A549 (cell line): ENCODE measurements at regions of chr3 and their contacts with region 1.

Region 1: GRCh38 chr3:150787741-150788370 is 24.9 kb upstream of the SIAH2 start:
- DNase-seq: peak; percentile 53 to 84
- ATAC-seq: peak; percentile 90 to 97
- H3K4me3 ChIP-seq: no peak overlapping the region
- H3K27ac ChIP-seq: no peak overlapping the region
- H3K4me1 ChIP-seq: no peaks in the 10 kb centered on the region
- CTCF ChIP-seq: peak; percentile 94
- EP300 ChIP-seq: no peak
- POLR2A ChIP-seq: no peak
- RAD21 ChIP-seq: peak; percentile 88 to 91

Region 2: DNA sequence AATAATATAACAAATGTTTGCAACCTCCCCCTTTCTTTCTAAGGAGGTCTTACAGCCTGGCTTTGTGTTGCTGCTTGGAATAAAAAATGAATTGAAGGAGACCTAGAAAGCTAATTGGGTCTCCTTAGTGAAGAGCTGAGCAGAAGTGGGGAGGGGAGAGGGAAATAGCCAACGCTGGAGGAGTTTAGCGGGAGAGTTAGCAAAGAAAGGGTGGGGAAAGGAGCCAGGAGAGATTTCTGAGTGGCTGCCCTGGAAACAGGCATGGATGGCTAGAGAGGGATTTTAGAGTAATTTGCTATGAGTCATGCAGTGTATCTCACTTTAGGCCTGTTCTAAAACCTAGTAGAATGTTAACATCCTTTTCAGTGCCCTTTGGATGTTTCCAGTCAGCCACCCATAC is 772.0 kb before region 1 on chr3:
- CTCF ChIA-PET with region 1: no interaction called
- POLR2A ChIA-PET with region 1: no interaction called
- DNase-seq: no peak
- ATAC-seq: no peak
- H3K4me3 ChIP-seq: no peak overlapping the region
- H3K27ac ChIP-seq: no peak overlapping the region
- H3K4me1 ChIP-seq: no peaks in the 10 kb centered on the region
- CTCF ChIP-seq: no peak
- EP300 ChIP-seq: no peak
- POLR2A ChIP-seq: no peak
- RAD21 ChIP-seq: no peak

Region 3: GRCh38 chr3:150303776-150304175 is 484.1 kb before region 1 on chr3:
- CTCF ChIA-PET with region 1: no interaction called
- POLR2A ChIA-PET with region 1: no interaction called
- DNase-seq: peak; percentile 25 to 77
- ATAC-seq: peak; percentile 84 to 95; a peak in 4 of 6 replicates
- H3K4me3 ChIP-seq: no peak overlapping the region
- H3K27ac ChIP-seq: no peak overlapping the region
- H3K4me1 ChIP-seq: peaks cover 8% of the 10 kb centered on the region; the same call in 2 of the 3 replicates
- CTCF ChIP-seq: peak; percentile 57
- EP300 ChIP-seq: no peak
- POLR2A ChIP-seq: no peak
- RAD21 ChIP-seq: peak; percentile 68 to 83

Region 4: DNA sequence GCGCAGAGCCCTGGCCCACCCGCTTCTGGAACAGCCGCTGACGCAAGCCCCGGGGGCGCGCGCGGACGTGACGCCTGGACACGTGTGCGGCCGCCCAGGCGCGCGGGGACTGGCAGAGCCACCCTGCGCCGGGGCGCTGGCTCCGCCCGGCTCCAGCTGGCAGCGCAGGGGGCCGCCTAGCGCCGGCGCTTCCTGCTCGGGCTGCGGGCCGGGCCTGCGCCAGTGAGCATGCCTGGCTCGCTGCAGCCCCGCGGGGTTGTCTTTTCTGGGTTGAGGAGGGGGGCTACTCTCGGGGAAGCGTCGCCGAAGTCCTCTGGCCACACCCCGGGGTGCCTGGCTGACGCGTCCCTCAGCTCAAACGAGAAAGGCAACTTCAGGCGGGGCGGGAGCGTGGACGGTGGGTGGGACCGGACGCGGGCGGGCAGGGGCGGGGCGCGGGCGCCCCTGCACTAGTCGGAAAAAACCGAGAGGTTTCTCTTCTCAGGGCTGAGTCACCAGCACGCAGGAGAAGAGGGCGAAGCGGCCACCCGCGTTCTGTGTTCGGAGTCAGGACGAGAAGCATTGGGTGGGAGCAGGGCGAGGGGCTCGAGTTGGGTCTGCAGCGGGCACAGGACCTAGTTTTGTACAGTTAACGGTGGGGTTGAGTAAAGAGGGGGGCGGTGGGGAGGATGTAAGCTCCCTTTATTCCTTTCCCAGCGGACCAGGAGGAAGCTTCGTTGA is 24.6 kb before region 1 on chr3 and contains the start of gene SIAH2:
- CTCF ChIA-PET with region 1: interaction called, 25 read pairs
- POLR2A ChIA-PET with region 1: interaction called, 6 read pairs
- DNase-seq: peak; percentile 93 to 95
- ATAC-seq: peak; percentile 87 to 91
- H3K4me3 ChIP-seq: peak within 1 kb of the TSS; percentile 96
- H3K27ac ChIP-seq: peak within 1 kb of the TSS; percentile 95 to 97
- H3K4me1 ChIP-seq: peaks cover 24% of the 10 kb centered on the region
- CTCF ChIP-seq: no peak
- EP300 ChIP-seq: no peak
- POLR2A ChIP-seq: peak; percentile 94
- RAD21 ChIP-seq: no peak
- polyA plus RNA-seq, gene SIAH2: 24.8 and 28.6 TPM in 2 replicates

Region 5: GRCh38 chr3:150798122-150798626 is 10.3 kb after region 1 on chr3:
- CTCF ChIA-PET with region 1: interaction called, 19 read pairs
- POLR2A ChIA-PET with region 1: no interaction called
- DNase-seq: peak in 1 of 2 experiments; percentile 12
- ATAC-seq: peak; percentile 34 to 63; a peak in 3 of 6 replicates
- H3K4me3 ChIP-seq: no peak overlapping the region
- H3K27ac ChIP-seq: peak overlapping the region in 1 of 2 experiments; percentile 19; a peak in 1 of 6 replicates
- H3K4me1 ChIP-seq: peaks cover 5% of the 10 kb centered on the region; the same call in 1 of the 3 replicates
- CTCF ChIP-seq: no peak
- EP300 ChIP-seq: no peak
- POLR2A ChIP-seq: no peak
- RAD21 ChIP-seq: no peak

Region 6: DNA sequence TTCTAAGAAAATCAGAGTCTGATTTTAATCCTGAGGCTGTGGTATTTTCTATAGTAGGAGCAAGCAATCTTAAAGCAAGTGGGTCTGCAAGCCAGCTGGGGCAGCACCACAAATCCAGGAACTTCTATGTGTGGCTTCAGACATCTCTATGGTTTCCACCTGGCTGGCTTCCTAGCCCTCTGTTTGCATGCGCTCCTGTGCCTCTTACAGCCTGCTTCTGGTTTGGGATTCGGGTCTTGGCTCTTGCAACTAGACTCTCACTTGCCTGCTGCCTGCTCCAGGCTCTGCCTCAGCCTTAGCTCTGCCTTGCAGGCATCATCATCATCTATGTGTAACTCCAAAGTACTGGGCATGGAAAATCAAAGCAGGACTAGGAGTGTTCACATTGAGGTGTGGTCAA is 74.0 kb after region 1 on chr3:
- CTCF ChIA-PET with region 1: interaction called, 47 read pairs
- POLR2A ChIA-PET with region 1: no interaction called
- DNase-seq: no peak
- ATAC-seq: no peak
- H3K4me3 ChIP-seq: no peak overlapping the region
- H3K27ac ChIP-seq: no peak overlapping the region
- H3K4me1 ChIP-seq: no peaks in the 10 kb centered on the region
- CTCF ChIP-seq: no peak
- EP300 ChIP-seq: no peak
- POLR2A ChIP-seq: no peak
- RAD21 ChIP-seq: no peak

Region 7: DNA sequence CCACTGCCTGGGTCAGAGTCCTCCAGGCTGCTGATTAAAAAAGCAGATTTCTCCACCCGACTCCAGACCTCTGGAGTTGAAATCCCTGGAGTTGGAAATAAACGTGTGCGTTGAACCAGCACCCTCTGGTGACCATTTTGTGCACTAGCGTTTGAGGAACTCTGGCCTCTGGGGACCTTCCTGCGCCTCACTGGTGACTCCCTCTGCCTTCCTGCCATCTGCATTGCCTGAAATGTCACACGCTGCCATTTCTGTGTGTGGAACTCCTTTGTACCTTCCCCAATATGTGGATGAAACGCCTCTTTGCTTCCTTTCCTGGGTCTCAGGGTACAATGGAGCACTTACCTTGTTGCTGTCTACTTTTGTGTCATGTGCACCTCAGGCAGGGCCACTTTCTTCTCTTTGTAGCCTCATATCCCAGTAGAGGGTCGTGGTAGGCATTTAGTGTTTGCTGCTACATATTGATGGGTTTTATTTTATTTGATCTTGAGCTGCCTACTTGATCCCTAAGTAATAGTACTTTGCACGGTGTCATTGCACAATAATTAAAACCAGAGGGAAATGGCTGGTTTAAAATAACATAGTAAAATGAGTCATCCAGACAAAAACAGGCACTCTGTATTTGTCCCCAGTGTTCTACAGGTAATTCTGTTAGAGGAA is 358.3 kb after region 1 on chr3:
- CTCF ChIA-PET with region 1: interaction called, 24 read pairs
- POLR2A ChIA-PET with region 1: no interaction called
- DNase-seq: peak; percentile 60 to 79
- ATAC-seq: peak; percentile 96 to 98
- H3K4me3 ChIP-seq: no peak overlapping the region
- H3K27ac ChIP-seq: no peak overlapping the region
- H3K4me1 ChIP-seq: peaks cover 7% of the 10 kb centered on the region; the same call in 2 of the 3 replicates
- CTCF ChIP-seq: peak; percentile 95
- EP300 ChIP-seq: no peak
- POLR2A ChIP-seq: no peak
- RAD21 ChIP-seq: peak; percentile 93 to 94